ENCODE measurements at regions of chr15 and their contacts with region 1.

Region 1: DNA sequence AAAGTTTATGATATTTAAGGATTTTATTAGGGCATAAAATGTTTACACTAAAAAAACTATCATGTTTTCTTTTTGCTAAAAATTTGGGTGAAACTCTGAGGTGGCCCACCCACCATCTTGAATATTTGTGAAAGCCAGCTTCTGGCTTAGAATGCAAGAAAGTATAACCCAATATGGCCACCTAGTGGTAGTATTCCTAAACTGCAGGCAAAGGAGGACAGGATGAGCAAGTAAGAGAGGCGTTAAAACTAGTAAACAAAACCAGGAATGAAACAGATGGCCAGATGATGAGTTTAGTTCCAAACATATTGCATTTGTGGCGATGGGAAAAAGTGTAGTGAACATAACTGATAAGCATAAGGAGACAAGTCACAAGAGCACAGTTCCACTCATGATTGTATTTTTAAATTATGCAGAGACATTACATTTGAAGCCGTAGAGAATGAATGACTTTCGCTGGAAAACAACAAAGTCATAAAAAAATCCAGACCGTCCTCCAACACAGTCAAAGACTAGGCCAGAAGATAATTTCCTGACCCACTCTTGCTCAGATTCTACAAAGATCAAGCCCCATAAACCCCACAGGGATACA is 103.3 kb upstream of the PRTG start:
- DNase-seq: peak in 1 of 2 donors; percentile 9
- ATAC-seq: peak; percentile 62

Region 2: GRCh38 chr15:55514414-55514850 is 331.8 kb before region 1 on chr15:
- intact Hi-C with region 1: no loop called
- DNase-seq: no peak
- ATAC-seq: no peak

Region 3: GRCh38 chr15:55654561-55655031 is 191.6 kb before region 1 on chr15:
- intact Hi-C with region 1: loop called in 1 of 2 experiments (anchors 5 kb)
- DNase-seq: no peak
- ATAC-seq: no peak

Region 4: GRCh38 chr15:56176996-56177395 is 330.8 kb after region 1 on chr15:
- intact Hi-C with region 1: no loop called
- DNase-seq: no peak
- ATAC-seq: no peak